ENCODE measurements at regions of chrX and their contacts with region 1.

Region 1: GRCh38 chrX:108138814-108139702 is 47.5 kb downstream of the ATG4A start:
- DNase-seq: no peak
- H3K4me3 ChIP-seq: no peak overlapping the region
- H3K27me3 ChIP-seq: no peaks in the 10 kb centered on the region
- CTCF ChIP-seq: peak; percentile 54

Region 2: GRCh38 chrX:108020631-108021030 is 118.4 kb before region 1 on chrX:
- CTCF ChIA-PET with region 1: interaction called, 15 read pairs
- POLR2A ChIA-PET with region 1: no interaction called
- DNase-seq: no peak
- H3K4me3 ChIP-seq: no peak overlapping the region
- H3K27me3 ChIP-seq: no peaks in the 10 kb centered on the region
- CTCF ChIP-seq: peak; percentile 44

Region 3: GRCh38 chrX:108122748-108123147 is 16.3 kb before region 1 on chrX:
- CTCF ChIA-PET with region 1: interaction called, 14 read pairs
- POLR2A ChIA-PET with region 1: no interaction called
- DNase-seq: peak; percentile 16
- H3K4me3 ChIP-seq: no peak overlapping the region
- H3K27me3 ChIP-seq: no peaks in the 10 kb centered on the region
- CTCF ChIP-seq: no peak